ENCODE measurements at regions of chr14 and their contacts with region 1.

Region 1: DNA sequence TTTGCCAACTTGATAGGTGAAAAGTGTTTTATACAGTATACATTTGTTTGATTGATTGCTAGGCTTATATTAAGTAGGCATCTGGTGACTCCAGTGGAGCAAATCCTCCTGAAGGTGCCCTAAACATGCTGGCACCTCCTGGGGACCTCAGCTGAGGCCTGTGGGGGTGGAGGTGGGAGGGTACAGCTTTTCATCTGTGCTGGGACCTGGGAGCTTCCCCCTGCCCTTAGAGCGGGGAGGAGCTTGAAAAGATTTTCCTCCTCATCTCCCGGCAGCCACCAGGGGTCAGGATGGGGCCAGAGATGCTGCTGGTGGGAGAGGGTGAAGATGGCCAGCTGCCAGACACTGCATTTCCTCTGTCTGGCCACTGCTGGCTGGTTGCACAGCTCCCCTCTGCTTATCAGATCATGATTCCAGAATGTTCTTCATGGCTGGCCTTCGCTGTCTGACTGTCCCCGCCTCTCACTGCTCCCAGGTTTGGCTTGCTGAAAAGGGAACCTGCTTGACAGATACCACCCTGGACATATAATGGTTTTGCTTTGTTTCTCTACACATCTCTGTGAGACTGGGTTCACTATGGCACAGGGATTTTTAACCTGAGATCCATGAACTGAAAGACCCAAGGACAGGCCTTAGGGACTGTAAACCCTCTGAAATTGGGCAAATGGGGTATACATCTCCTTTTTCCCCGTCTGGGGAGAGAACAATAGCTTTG is 10.5 kb upstream of the JPH4 start:
- DNase-seq: peak; percentile 93
- ATAC-seq: peak; percentile 99
- H3K4me3 Mint-ChIP-seq: no peak overlapping the region
- H3K27ac Mint-ChIP-seq: no peak overlapping the region
- H3K4me1 Mint-ChIP-seq: peaks cover 7% of the 10 kb centered on the region
- H3K27me3 Mint-ChIP-seq: peaks cover 16% of the 10 kb centered on the region

Region 2: GRCh38 chr14:23478111-23478759 is 110.8 kb before region 1 on chr14:
- CTCF ChIA-PET with region 1: no interaction called
- POLR2A ChIA-PET with region 1: no interaction called
- intact Hi-C with region 1: no loop called
- DNase-seq: peak; percentile 79
- ATAC-seq: peak; percentile 63
- H3K4me3 Mint-ChIP-seq: no peak overlapping the region
- H3K27ac Mint-ChIP-seq: no peak overlapping the region
- H3K4me1 Mint-ChIP-seq: peaks cover 11% of the 10 kb centered on the region
- H3K27me3 Mint-ChIP-seq: no peaks in the 10 kb centered on the region

Region 3: DNA sequence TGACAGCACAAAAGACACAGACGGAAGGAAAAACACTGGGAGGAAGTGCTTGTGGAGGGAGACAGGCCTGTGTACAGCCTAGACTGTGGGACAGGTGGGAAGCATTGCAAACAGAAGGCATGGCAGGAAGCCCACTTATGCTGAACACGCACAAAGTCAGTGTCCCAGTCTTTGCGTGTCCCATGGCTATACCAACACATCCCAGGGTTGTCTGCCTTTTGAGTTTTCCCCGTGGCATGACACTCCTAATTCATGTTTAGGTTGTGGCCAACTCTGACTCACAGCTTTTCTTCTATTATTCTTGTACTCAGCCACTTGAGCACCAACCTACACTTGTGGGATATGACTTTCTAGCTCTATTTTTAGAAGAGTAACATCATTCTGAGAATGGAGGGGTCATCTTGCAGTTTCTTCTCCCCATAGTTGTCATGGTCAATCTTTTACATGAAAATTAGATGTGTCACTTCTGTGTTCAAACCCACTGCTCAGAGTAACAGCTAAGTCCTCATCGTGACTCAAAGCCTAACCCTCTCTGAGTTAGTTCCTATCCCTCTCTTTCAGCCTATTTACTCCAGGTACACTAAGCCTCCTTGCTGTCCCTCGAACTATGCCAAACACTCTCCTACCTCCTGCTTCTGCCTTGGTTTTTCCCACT is 17.0 kb after region 1 on chr14:
- CTCF ChIA-PET with region 1: interaction called, 33 read pairs
- POLR2A ChIA-PET with region 1: no interaction called
- intact Hi-C with region 1: no loop called
- DNase-seq: peak; percentile 44
- ATAC-seq: peak; percentile 90
- H3K4me3 Mint-ChIP-seq: peak overlapping the region; percentile 2
- H3K27ac Mint-ChIP-seq: peak overlapping the region; percentile 84
- H3K4me1 Mint-ChIP-seq: peaks cover 48% of the 10 kb centered on the region
- H3K27me3 Mint-ChIP-seq: no peaks in the 10 kb centered on the region

Region 4: GRCh38 chr14:23727566-23728335 is 138.7 kb after region 1 on chr14:
- CTCF ChIA-PET with region 1: no interaction called
- POLR2A ChIA-PET with region 1: no interaction called
- intact Hi-C with region 1: loop called in 1 of 2 experiments (anchors 2 kb)
- DNase-seq: no peak
- ATAC-seq: peak; percentile 57
- H3K4me3 Mint-ChIP-seq: no peak overlapping the region
- H3K27ac Mint-ChIP-seq: no peak overlapping the region
- H3K4me1 Mint-ChIP-seq: no peaks in the 10 kb centered on the region
- H3K27me3 Mint-ChIP-seq: peaks cover 4% of the 10 kb centered on the region

Region 5: GRCh38 chr14:23910101-23910875 is 321.2 kb after region 1 on chr14:
- CTCF ChIA-PET with region 1: interaction called, 12 read pairs
- POLR2A ChIA-PET with region 1: no interaction called
- intact Hi-C with region 1: loop called in 1 of 2 experiments (anchors 1 kb)
- DNase-seq: peak; percentile 46
- ATAC-seq: no peak
- H3K4me3 Mint-ChIP-seq: no peak overlapping the region
- H3K27ac Mint-ChIP-seq: no peak overlapping the region
- H3K4me1 Mint-ChIP-seq: no peaks in the 10 kb centered on the region
- H3K27me3 Mint-ChIP-seq: peaks cover 18% of the 10 kb centered on the region

Region 6: GRCh38 chr14:23929822-23930294 is 340.8 kb after region 1 on chr14:
- CTCF ChIA-PET with region 1: interaction called, 25 read pairs
- POLR2A ChIA-PET with region 1: no interaction called
- intact Hi-C with region 1: loop called (anchors 1 kb)
- DNase-seq: peak; percentile 91
- ATAC-seq: peak; percentile 91
- H3K4me3 Mint-ChIP-seq: no peak overlapping the region
- H3K27ac Mint-ChIP-seq: no peak overlapping the region
- H3K4me1 Mint-ChIP-seq: no peaks in the 10 kb centered on the region
- H3K27me3 Mint-ChIP-seq: no peaks in the 10 kb centered on the region

Region 7: DNA sequence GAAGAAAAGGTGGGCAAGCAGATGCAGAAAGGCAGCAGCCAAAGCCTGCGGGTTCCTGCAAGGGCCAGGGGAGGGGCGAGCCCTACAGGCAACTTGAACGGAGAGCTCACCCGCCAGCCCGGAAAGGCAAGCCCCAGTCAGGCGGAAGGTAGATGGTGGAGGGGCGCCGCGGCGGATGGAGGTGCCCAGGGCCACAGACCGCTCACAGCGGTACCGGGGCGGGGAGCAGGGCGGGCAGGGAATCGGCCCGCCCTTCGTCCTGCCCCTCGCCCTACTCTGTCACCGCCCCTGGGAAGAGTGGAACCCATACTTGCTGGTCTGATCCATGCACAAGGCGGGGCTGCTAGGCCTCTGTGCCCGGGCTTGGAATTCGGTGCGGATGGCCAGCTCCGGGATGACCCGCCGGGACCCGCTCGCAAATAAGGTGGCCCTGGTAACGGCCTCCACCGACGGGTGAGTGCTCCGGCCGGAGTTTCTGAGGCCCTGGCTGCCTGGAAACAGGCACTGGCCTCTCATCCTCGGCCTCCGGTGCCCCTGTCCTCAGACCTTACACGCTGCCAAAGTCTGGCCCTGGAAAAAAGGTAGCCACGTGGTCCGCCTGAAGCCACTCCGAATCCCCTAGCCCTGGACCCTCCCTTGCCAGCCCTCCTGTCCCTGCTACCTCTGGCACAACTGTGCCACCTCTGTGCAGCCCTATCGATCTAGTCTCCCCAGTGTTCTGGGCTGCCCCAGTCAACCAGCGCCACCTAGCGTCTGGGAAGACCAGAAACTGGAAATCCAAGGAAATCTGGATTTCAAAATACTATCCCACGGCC is 364.6 kb after region 1 on chr14 and contains the start of gene DHRS4:
- CTCF ChIA-PET with region 1: no interaction called
- POLR2A ChIA-PET with region 1: no interaction called
- intact Hi-C with region 1: loop called (anchors 1 kb)
- DNase-seq: peak; percentile 89
- ATAC-seq: peak; percentile 96
- H3K4me3 Mint-ChIP-seq: peak within 1 kb of the TSS; percentile 88
- H3K27ac Mint-ChIP-seq: peak within 1 kb of the TSS; percentile 93
- H3K4me1 Mint-ChIP-seq: peaks cover 23% of the 10 kb centered on the region
- H3K27me3 Mint-ChIP-seq: no peaks in the 10 kb centered on the region
- total RNA-seq, gene DHRS4: 32.2 to 36.2 TPM